CD4-positive, alpha-beta memory T cell (primary cell): ENCODE measurements at regions of chr21 and their contacts with region 1.

Region 1: DNA sequence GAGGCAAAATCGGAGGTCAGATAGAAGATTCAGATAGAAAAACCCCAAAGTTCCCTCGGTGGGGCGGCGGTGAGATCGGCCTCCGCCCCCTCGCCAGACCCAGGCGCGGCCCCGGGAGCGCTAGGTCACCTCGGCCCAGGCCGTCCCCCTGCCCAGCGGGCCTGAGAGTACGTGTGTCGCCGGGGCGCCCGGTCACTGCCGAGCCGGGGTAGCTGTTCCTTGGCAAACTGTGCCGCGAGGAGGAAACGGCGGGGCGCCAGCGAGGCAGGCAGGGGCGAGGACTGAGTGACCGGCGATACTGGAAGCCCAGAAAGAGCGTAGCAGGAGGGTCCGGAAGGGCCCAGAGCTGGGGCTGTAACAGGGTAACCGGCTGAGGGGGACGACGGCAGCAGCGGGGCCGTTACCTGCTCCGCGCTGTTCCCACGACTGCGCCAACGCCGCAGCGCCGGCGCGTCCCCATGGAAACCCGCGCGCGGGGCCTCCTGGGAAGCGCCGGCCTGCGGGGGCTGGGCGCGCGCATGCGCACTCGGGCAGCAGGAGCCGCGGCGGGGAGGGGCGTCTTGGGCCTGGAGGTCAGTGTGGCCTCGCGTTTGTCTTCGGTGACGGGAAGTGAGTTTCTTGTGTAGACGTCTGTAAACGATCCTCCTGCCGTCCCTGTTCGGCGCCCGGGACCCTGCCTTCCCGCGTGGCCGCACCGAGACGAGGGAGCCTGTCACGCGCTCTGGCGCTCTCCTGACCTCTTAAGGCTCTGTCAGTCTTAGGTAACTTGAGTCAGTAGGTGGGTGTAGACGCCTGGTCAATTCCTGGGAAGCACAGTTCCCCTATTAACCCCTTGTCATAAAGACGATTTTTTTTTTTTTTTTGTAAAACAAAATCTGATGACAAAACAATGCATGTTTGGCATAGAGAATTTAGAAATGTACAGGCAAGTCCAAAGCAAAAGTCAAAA is at the start of gene LCA5L:
- DNase-seq: peak; percentile 86 to 91 (median 89)
- H3K4me3 ChIP-seq: peak within 1 kb of the TSS; percentile 69 to 75
- H3K4me3 Mint-ChIP-seq: peak within 1 kb of the TSS; percentile 90 to 99 (median 96)
- H3K27ac ChIP-seq: peak within 1 kb of the TSS; percentile 72
- H3K27ac Mint-ChIP-seq: peak within 1 kb of the TSS; percentile 92 to 98 (median 96)
- H3K4me1 ChIP-seq: peaks cover 13% of the 10 kb centered on the region
- H3K4me1 Mint-ChIP-seq: peaks cover 12 to 19% (median 15%) of the 10 kb centered on the region in 4 donors
- H3K27me3 ChIP-seq: no peaks in the 10 kb centered on the region
- H3K27me3 Mint-ChIP-seq: peaks cover 4 to 5% of the 10 kb centered on the region in 2 donors
- total RNA-seq, gene LCA5L: not detected

Region 2: GRCh38 chr21:38805328-38806152 is 640.1 kb before region 1 on chr21 and contains the start of gene ETS2:
- CTCF ChIA-PET with region 1: no interaction called
- POLR2A ChIA-PET with region 1: no interaction called
- intact Hi-C with region 1: loop called (anchors 5 kb)
- DNase-seq: peak; percentile 59 to 79 (median 65)
- H3K4me3 ChIP-seq: peak within 1 kb of the TSS; percentile 62 to 82
- H3K4me3 Mint-ChIP-seq: peak within 1 kb of the TSS; percentile 87 to 94 (median 90)
- H3K27ac ChIP-seq: peak within 1 kb of the TSS; percentile 59
- H3K27ac Mint-ChIP-seq: peak within 1 kb of the TSS; percentile 65 to 95 (median 83)
- H3K4me1 ChIP-seq: peaks cover 32% of the 10 kb centered on the region
- H3K4me1 Mint-ChIP-seq: peaks cover 24 to 35% (median 30%) of the 10 kb centered on the region in 4 donors
- H3K27me3 ChIP-seq: no peaks in the 10 kb centered on the region
- H3K27me3 Mint-ChIP-seq: no peaks in the 10 kb centered on the region
- total RNA-seq, gene ETS2: 14.6 to 15.2 TPM

Region 3: DNA sequence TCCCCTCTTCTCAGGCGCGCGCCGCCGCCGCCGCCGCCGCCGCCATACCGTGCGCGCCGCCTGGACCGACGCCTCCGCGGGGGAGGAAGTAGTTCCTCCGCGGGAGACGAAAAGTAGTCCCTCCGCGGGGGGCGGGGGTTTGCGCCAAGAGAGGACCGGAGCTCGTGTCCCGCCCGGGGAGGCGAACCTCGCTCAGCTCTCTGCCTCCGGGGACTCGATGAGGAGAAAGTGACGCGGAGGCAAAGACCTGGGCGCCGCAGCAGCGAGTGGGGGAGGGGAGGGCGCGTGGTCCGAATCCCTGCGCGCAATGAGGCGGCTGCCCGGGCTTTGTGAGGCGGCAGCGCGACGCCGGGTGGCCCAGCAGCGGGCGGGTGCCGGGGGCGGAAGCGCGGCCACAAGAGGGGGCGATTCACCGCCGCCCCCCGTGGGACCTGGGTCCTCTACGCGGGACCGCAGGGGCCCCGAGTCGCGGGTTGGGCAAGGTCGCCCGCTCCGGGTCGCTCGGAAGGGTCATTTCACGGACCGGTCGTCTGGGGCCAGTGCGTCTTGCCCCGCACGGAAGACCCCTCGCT is 131.9 kb before region 1 on chr21 and contains the start of gene BRWD1:
- CTCF ChIA-PET with region 1: interaction called, 3 read pairs
- POLR2A ChIA-PET with region 1: no interaction called
- intact Hi-C with region 1: loop called (anchors 1 kb)
- DNase-seq: peak; percentile 80 to 87 (median 86)
- H3K4me3 ChIP-seq: peak within 1 kb of the TSS; percentile 33 to 85
- H3K4me3 Mint-ChIP-seq: peak within 1 kb of the TSS; percentile 85 to 95 (median 92)
- H3K27ac ChIP-seq: peak within 1 kb of the TSS; percentile 74
- H3K27ac Mint-ChIP-seq: peak within 1 kb of the TSS; percentile 92 to 99 (median 95)
- H3K4me1 ChIP-seq: peaks cover 35% of the 10 kb centered on the region
- H3K4me1 Mint-ChIP-seq: peaks cover 33 to 53% (median 40%) of the 10 kb centered on the region in 4 donors
- H3K27me3 ChIP-seq: no peaks in the 10 kb centered on the region
- H3K27me3 Mint-ChIP-seq: peaks cover 0 to 2% of the 10 kb centered on the region in 2 donors
- total RNA-seq, gene BRWD1: 92.9 to 99.0 TPM

Region 4: DNA sequence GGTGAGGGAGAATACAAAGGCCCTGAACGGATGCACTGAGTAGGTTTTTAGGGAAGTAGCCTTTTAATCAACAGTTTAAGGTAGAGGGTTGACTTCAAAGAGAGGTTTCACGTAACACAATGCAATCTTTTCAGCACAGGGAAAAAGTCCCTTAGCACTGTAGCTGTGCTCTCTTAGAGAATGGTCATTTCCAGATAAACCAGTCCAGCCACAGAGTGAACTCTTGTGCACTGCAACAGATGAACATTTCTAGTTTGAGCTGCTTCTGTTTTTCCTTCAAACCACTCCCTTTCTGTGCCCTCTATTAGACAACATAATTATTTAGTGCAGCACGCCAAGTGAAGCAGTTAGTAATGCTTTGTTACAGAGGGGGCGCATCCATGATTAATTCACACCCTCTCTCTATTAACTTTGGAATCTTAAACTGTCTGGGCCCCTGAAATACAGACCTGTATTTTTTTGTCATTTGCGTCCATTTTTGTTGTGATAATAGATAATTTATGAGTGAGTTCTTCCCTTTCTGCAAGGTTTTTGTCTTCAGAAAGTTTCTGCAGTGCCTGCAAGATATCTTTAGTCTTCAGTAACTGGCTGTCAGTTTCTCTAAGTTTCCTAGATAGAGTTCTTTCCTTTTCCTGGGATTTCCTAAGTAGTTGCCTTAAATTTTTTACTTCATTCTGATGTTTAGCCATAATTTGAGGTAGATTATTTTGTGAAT is 22.9 kb before region 1 on chr21:
- CTCF ChIA-PET with region 1: interaction called, 10 read pairs
- POLR2A ChIA-PET with region 1: no interaction called
- intact Hi-C with region 1: no loop called
- DNase-seq: no peak
- H3K4me3 ChIP-seq: no peak overlapping the region
- H3K4me3 Mint-ChIP-seq: no peak overlapping the region
- H3K27ac ChIP-seq: no peak overlapping the region
- H3K27ac Mint-ChIP-seq: no peak overlapping the region
- H3K4me1 ChIP-seq: no peaks in the 10 kb centered on the region
- H3K4me1 Mint-ChIP-seq: no peaks in the 10 kb centered on the region
- H3K27me3 ChIP-seq: no peaks in the 10 kb centered on the region
- H3K27me3 Mint-ChIP-seq: no peaks in the 10 kb centered on the region